ENCODE measurements at regions of chr16 and their contacts with region 1.

Region 1: GRCh38 chr16:31382485-31383161 is 10.5 kb upstream of the ITGAD start:
- DNase-seq: peak; percentile 85
- ATAC-seq: peak; percentile 63
- H3K4me3 Mint-ChIP-seq: no peak overlapping the region
- H3K27ac Mint-ChIP-seq: no peak overlapping the region
- H3K4me1 Mint-ChIP-seq: peaks cover 25% of the 10 kb centered on the region
- H3K27me3 Mint-ChIP-seq: peaks cover 9% of the 10 kb centered on the region

Region 2: DNA sequence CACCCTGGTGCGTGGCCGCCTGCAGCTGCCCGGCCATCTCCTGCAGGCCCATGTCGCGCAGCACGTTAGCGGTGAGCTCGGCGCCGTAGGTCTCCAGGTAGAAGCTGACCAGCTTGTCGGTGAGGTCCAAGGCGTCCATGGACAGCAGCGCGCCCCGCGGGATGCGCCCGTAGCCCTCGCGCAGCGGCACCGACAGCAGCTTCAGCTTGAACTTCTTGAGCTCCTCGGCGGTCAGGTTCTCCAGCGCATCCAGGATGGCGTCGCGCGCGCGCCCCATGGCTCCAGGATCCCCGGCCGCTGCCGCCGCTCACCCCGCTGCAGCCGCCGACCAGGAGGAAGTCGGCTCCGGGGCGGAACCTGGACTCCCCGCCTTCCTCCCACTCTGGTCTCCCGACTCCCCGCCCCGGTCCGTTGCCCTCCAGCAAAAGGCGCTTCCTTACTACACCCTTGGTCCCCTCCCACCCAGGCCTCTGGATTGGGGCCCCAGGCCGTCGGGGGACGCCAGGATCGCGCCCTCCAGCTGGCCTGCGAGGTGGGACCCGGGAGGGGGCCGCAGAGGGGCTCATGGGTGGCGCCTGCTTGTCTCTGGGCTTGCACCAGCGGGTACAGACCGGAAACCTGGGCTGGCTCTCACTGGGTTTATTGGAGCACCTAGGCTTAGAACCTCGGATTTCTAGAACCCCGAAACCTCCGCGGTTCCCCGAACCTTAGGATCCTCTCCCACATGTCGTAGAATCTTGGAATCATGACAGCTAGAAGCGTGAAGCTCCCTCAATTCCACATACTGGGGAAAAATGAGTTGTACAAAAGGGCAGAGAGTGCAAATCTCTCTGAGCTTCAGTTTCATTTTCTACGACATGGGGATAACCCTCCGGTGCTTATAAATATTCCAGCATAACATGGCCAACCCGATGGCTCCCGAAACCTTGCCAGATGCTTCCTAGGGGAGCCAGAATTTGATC is 179.9 kb before region 1 on chr16 and contains the start of gene PYCARD:
- CTCF ChIA-PET with region 1: no interaction called
- POLR2A ChIA-PET with region 1: interaction called, 7 read pairs
- intact Hi-C with region 1: loop called in 1 of 2 experiments (anchors 5 kb)
- DNase-seq: peak; percentile 53
- ATAC-seq: peak; percentile 7
- H3K4me3 Mint-ChIP-seq: peak within 1 kb of the TSS; percentile 71
- H3K27ac Mint-ChIP-seq: peak within 1 kb of the TSS; percentile 52
- H3K4me1 Mint-ChIP-seq: peaks cover 47% of the 10 kb centered on the region
- H3K27me3 Mint-ChIP-seq: peaks cover 3% of the 10 kb centered on the region
- total RNA-seq, gene PYCARD: 5.7 TPM

Region 3: DNA sequence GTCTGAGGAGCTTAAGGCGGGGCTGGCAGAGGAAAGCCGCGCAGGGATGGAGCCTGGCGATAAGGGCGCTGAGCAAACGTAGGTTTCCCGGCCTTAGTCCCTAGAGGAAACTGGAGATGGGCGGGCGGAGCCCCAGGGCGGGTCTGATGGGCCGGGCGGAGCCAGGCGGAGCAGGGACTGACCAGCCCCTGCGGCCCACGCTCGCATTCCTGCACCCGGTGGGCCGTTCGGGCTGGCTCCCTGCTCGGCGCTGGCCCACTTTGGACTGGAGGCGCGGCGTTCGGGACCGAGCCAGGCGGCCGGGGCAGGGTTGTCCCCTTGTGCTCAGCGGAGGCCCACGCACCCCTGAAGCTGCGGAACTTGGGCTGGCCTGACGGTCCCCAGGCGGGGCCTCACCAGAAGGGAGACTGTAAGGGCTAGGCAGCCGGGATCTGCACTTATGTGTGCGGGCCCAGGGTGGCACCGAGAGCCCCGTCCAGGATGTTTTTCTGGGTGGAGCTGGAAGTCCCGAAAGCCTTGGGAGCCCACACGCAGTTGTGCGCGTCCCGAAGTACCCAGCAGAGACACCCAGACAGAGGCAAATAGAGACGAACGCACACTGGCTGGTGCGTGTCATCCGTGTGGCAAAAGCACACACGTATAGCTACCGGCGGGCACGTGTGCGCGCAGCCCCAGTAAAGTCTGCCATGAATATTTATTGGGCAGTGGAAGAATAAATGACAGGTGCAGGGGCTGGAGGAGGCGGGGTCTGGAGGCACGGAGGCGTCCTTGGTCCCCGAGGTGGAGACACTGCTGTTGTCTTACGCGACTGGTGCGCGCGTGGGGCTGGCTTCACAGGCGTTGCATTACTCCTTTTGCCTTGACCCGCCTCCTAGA is 167.1 kb before region 1 on chr16:
- CTCF ChIA-PET with region 1: interaction called, 3 read pairs
- POLR2A ChIA-PET with region 1: no interaction called
- intact Hi-C with region 1: loop called (anchors 2 to 10 kb)
- DNase-seq: peak; percentile 45
- ATAC-seq: peak; percentile 45
- H3K4me3 Mint-ChIP-seq: peak overlapping the region; percentile 52
- H3K27ac Mint-ChIP-seq: no peak overlapping the region
- H3K4me1 Mint-ChIP-seq: peaks cover 23% of the 10 kb centered on the region
- H3K27me3 Mint-ChIP-seq: peaks cover 44% of the 10 kb centered on the region

Region 4: DNA sequence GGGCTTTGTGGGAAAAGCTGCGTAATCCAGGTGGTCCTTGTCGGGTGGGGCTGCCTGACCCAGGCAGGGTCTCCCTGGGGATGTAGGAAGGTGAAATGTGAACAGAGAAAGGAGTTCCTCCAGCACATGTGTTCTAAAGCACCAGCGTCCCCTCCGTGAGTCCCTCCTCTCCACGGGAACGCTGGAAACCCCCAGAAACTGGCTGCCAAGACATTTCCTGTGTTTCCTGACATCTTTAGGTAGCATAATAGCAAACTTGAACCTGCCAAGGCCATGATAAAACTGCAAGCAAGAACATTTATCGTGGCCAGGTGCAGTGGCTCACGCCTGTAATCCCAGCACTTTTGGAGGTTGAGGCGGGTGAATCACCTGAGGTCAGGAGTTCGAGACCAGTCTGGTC is 153.1 kb before region 1 on chr16:
- CTCF ChIA-PET with region 1: no interaction called
- POLR2A ChIA-PET with region 1: no interaction called
- intact Hi-C with region 1: no loop called
- DNase-seq: no peak
- ATAC-seq: no peak
- H3K4me3 Mint-ChIP-seq: no peak overlapping the region
- H3K27ac Mint-ChIP-seq: no peak overlapping the region
- H3K4me1 Mint-ChIP-seq: no peaks in the 10 kb centered on the region
- H3K27me3 Mint-ChIP-seq: peaks cover 3% of the 10 kb centered on the region

Region 5: DNA sequence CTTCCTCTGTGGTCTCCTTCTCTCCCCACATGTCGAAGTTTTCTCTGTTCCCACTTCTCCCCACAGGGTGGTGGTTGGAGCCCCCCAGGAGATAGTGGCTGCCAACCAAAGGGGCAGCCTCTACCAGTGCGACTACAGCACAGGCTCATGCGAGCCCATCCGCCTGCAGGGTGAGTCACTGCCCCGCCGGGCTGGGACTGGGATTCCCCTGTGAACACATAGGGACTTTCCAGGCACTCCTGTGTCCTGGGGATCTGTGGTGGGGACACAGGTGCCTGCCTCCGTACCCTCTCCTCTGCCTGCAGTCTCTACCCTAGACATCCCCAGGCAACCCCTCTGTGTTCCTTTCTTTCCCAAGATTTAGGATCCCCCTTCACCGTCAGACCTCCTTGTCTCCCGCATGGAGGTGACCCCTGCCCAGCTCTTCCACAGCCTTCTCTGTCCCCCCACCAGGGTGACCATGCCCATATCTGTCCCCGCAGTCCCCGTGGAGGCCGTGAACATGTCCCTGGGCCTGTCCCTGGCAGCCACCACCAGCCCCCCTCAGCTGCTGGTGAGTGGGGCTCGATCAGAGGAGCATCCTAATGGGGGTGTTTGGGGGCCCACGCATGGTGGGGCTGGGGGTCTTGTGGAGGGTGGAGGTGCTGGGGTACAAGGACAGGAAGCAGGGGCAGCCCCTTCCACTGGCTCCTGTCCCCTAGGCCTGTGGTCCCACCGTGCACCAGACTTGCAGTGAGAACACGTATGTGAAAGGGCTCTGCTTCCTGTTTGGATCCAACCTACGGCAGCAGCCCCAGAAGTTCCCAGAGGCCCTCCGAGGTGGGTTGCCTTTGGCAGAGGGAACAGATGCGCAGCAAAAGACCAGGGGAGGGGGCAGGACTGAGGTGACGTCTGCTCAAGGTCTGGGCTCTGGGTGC is 117.0 kb before region 1 on chr16:
- CTCF ChIA-PET with region 1: interaction called, 3 read pairs
- POLR2A ChIA-PET with region 1: no interaction called
- intact Hi-C with region 1: loop called in 1 of 2 experiments (anchors 2 kb)
- DNase-seq: peak; percentile 91
- ATAC-seq: peak; percentile 97
- H3K4me3 Mint-ChIP-seq: peak overlapping the region; percentile 10
- H3K27ac Mint-ChIP-seq: peak overlapping the region; percentile 86
- H3K4me1 Mint-ChIP-seq: peaks cover 40% of the 10 kb centered on the region
- H3K27me3 Mint-ChIP-seq: peaks cover 6% of the 10 kb centered on the region

Region 6: GRCh38 chr16:31354394-31355291 is 28.0 kb before region 1 on chr16 and contains the start of gene ITGAX:
- CTCF ChIA-PET with region 1: no interaction called
- POLR2A ChIA-PET with region 1: interaction called, 7 read pairs
- intact Hi-C with region 1: loop called in 1 of 2 experiments (anchors 2 kb)
- DNase-seq: peak; percentile 91
- ATAC-seq: peak; percentile 86
- H3K4me3 Mint-ChIP-seq: peak within 1 kb of the TSS; percentile 12
- H3K27ac Mint-ChIP-seq: peak within 1 kb of the TSS; percentile 85
- H3K4me1 Mint-ChIP-seq: peaks cover 31% of the 10 kb centered on the region
- H3K27me3 Mint-ChIP-seq: peaks cover 8% of the 10 kb centered on the region
- total RNA-seq, gene ITGAX: 5.3 to 6.6 TPM

Region 7: GRCh38 chr16:31421587-31421986 is 39.0 kb after region 1 on chr16:
- CTCF ChIA-PET with region 1: no interaction called
- POLR2A ChIA-PET with region 1: no interaction called
- intact Hi-C with region 1: loop called in 1 of 2 experiments (anchors 2 kb)
- DNase-seq: peak; percentile 82
- ATAC-seq: peak; percentile 98
- H3K4me3 Mint-ChIP-seq: no peak overlapping the region
- H3K27ac Mint-ChIP-seq: peak overlapping the region; percentile 47
- H3K4me1 Mint-ChIP-seq: peaks cover 10% of the 10 kb centered on the region
- H3K27me3 Mint-ChIP-seq: peaks cover 6% of the 10 kb centered on the region

Region 8: DNA sequence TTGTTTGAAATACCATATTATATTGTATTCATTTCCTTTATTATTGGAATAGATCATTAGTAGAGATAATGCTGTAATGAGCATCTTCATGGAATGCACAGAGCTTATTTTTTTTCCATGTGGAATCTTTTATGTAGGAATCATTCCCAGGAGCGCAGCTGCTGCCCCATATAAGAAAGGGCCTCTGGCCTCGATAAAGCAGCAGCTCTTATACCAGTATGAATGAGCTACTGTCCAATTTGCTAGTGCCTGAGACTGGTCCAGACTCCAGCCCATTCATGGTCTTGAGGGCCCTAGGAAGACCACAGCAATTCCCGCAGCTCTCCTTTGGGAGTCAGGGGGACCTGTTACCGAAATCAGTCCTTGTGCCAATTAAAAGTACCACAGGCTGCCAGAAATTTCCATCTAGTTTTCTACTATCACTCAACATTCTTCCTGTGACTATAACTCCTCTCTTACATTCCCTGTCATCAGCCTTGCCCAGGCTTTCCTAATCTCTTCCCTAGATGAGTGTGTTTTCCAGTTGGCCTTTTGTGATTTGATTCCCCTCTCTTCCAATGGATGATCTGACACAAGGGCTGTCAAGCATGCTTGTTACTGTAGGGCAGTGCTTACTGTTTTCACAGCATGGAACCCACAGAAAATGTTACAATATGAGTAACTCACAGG is 58.0 kb after region 1 on chr16:
- CTCF ChIA-PET with region 1: no interaction called
- POLR2A ChIA-PET with region 1: no interaction called
- intact Hi-C with region 1: loop called in 1 of 2 experiments (anchors 1 kb)
- DNase-seq: no peak
- ATAC-seq: no peak
- H3K4me3 Mint-ChIP-seq: no peak overlapping the region
- H3K27ac Mint-ChIP-seq: no peak overlapping the region
- H3K4me1 Mint-ChIP-seq: peaks cover 18% of the 10 kb centered on the region
- H3K27me3 Mint-ChIP-seq: peaks cover 2% of the 10 kb centered on the region

Measured in activated CD4-positive, alpha-beta T cell treated with anti-CD3 and anti-CD28 coated beads for 36 hours (primary cell).